ENCODE measurements at regions of chr5 and their contacts with region 1.

Region 1: DNA sequence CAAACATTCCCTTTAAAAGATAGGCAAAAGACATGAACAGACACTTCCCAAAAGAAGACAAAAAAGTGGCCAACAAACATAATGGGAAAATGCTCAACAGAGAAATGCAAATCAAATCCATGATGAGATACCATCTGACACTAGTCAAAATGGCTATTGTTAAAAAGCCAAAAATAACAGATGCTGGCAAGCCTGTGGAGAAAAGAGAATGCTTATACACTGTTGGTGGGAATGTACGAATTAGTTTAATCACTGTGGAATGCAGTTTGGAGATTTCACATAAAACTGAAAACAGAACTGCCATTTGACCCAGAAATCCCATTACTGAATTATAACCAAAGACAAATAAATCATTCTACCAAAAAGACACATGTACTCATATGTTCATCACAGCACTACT is 58.3 kb upstream of the WDR41 start:
- DNase-seq: no peak
- H3K4me3 ChIP-seq: no peak overlapping the region
- H3K27ac ChIP-seq: no peak overlapping the region
- H3K4me1 ChIP-seq: no peaks in the 10 kb centered on the region
- H3K27me3 ChIP-seq: no peaks in the 10 kb centered on the region
- CTCF ChIP-seq: no peak
- EP300 ChIP-seq: no peak
- POLR2A ChIP-seq: no peak

Region 2: DNA sequence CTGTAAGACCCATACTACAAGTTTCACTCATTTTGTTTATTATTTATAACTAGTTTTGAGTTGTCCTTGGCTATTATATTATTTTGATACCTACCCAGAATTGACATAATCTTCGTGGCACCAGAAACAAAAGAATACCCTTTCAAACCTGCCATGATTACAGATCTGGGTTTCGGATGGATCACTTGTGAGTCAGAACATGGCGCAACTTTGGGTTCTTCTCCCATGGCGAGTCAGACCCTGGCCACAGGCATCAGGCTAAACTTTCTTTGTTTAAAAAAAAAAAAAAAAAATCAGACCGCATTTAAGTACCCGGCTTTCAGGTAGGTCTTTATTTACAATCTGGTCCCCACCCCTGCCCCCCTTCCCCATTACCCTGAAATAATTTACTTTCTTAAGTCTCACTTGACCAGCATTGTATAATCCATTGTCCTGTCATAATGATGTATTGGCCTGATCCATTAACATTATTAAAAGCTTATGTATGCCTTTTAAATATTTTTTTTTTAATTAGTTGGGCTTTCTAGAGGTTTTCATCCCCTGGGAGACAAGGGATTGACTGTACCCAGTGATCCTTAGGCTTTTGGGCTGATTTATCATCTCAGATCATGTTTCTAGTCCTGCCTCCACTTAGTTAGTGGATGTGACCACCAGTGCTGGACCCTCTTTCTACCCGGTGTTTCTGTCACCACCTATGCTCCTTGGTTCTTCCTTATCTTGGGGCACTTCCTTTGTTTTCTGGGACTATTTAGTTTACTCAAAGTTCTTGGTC is 971.1 kb before region 1 on chr5:
- in situ Hi-C with region 1: no loop called
- intact Hi-C with region 1: loop called (anchors 5 kb)
- DNase-seq: no peak
- H3K4me3 ChIP-seq: no peak overlapping the region
- H3K27ac ChIP-seq: no peak overlapping the region
- H3K4me1 ChIP-seq: peaks cover 0 to 31% (median 12%) of the 10 kb centered on the region in 4 donors
- H3K27me3 ChIP-seq: no peaks in the 10 kb centered on the region
- CTCF ChIP-seq: no peak
- EP300 ChIP-seq: no peak
- POLR2A ChIP-seq: no peak

Region 3: GRCh38 chr5:77282337-77283027 is 267.9 kb before region 1 on chr5:
- in situ Hi-C with region 1: no loop called
- intact Hi-C with region 1: no loop called
- DNase-seq: no peak
- H3K4me3 ChIP-seq: no peak overlapping the region
- H3K27ac ChIP-seq: peak overlapping the region in 1 of 4 donors; percentile 43
- H3K4me1 ChIP-seq: no peaks in the 10 kb centered on the region
- H3K27me3 ChIP-seq: no peaks in the 10 kb centered on the region
- CTCF ChIP-seq: no peak
- EP300 ChIP-seq: no peak
- POLR2A ChIP-seq: no peak